Common myeloid progenitor, CD34-positive (primary cell): ENCODE measurements at regions of chr9 and their contacts with region 1.

Region 1: DNA sequence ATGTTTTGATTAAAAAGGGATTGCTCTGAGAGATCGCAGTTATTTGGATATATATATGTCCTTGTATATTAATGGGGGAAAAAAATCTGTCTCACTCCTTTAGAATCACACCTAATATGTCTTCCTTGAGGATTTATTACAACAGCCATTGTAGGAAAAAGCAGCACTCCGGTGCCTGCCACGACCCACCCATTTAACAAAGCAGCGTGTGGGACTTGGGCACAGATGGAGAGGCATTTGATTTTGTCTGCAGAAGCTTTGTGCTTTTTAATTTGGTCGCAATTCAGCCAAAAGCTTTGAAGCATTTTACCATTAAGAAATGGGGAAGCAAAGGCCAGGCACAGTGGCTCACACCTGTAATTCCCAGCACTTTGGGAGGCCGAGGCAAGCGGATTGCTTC is 159.2 kb downstream of the SMARCA2 start:
- DNase-seq: no peak
- H3K4me3 ChIP-seq: no peak overlapping the region
- H3K27ac ChIP-seq: no peak overlapping the region
- H3K4me1 ChIP-seq: peaks cover 0 to 17% (median 0%) of the 10 kb centered on the region in 4 experiments
- H3K27me3 ChIP-seq: no peaks in the 10 kb centered on the region

Region 2: DNA sequence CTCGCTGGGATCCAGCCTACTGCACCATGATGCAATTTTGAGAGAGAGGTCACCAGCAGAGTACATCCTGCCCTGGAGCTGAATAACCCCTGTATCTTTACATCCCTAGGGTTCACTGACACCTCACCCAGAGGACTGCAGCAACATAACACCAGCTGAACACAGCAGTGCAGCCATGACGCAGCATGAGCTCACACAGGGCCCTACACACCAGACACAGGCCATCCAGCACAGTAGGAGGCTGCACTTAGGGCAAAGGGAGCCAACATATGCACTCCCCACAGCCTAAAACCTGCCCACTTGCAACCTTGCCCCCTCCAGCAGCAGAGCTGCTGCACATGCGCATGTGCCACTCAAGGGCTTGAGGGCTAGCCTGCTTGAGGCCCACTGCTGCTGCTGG is 316.5 kb before region 1 on chr9:
- CTCF ChIA-PET with region 1: no interaction called
- POLR2A ChIA-PET with region 1: no interaction called
- DNase-seq: no peak
- H3K4me3 ChIP-seq: no peak overlapping the region
- H3K27ac ChIP-seq: no peak overlapping the region
- H3K4me1 ChIP-seq: no peaks in the 10 kb centered on the region
- H3K27me3 ChIP-seq: peaks cover 0 to 3% (median 0%) of the 10 kb centered on the region in 5 experiments

Region 3: GRCh38 chr9:2158111-2158610 is 16.1 kb before region 1 on chr9:
- CTCF ChIA-PET with region 1: interaction called, 99 read pairs
- POLR2A ChIA-PET with region 1: no interaction called
- DNase-seq: peak; percentile 86 to 96 (median 93)
- H3K4me3 ChIP-seq: peak overlapping the region in 6 of 7 experiments; percentile 34 to 76 (median 58)
- H3K27ac ChIP-seq: peak overlapping the region in 1 of 2 experiments; percentile 43
- H3K4me1 ChIP-seq: peaks cover 52 to 89% (median 63%) of the 10 kb centered on the region in 4 experiments
- H3K27me3 ChIP-seq: no peaks in the 10 kb centered on the region